Adrenal gland (tissue), 19 donors: ENCODE measurements at regions of chr17 and their contacts with region 1.

Region 1: GRCh38 chr17:37283414-37283961 is 92.3 kb upstream of the C17orf78 start:
- DNase-seq: no peak
- H3K4me3 ChIP-seq: no peak overlapping the region
- H3K27ac ChIP-seq: no peak overlapping the region
- H3K4me1 ChIP-seq: peaks cover 17 to 23% of the 10 kb centered on the region in 2 donors
- H3K27me3 ChIP-seq: no peaks in the 10 kb centered on the region
- CTCF ChIP-seq: no peak
- POLR2A ChIP-seq: no peak

Region 2: DNA sequence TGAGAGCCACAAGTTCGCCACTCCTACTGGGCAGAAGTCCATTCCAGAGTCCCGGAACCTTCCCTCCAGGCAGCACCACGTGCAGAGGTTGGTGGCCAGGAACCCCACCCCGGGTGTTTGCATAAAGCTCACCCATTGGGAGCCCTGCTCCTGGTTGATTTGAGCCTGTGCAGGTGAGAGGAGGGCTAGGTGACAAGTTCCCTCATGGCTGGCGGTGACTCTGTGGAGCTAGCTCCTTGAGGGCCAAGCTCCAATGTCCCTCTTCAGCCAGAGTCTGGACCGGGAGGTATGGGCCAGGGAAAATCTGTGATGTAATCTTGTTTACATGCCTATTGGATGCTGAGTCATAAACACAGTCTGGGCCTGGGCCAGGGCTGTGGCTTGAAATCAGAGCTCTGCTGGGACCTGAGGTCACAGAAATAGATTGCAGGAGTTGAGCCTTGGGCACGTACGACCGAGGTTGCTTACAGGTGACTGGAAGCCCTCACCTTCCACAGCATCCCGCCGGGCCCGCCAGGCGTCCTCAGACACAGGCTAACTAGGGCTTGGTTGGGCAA is 215.9 kb before region 1 on chr17:
- intact Hi-C with region 1: no loop called
- DNase-seq: peak; percentile 86 to 96 (median 93)
- H3K4me3 ChIP-seq: peak overlapping the region in 1 of 4 donors; percentile 28
- H3K27ac ChIP-seq: peak overlapping the region in 4 of 5 donors; percentile 14 to 81 (median 58)
- H3K4me1 ChIP-seq: peaks cover 0 to 5% of the 10 kb centered on the region in 2 donors
- H3K27me3 ChIP-seq: no peaks in the 10 kb centered on the region
- CTCF ChIP-seq: no peak
- POLR2A ChIP-seq: peak in 1 of 2 donors; percentile 70

Region 3: GRCh38 chr17:37259030-37259735 is 24.3 kb before region 1 on chr17:
- intact Hi-C with region 1: no loop called
- DNase-seq: no peak
- H3K4me3 ChIP-seq: no peak overlapping the region
- H3K27ac ChIP-seq: no peak overlapping the region
- H3K4me1 ChIP-seq: no peaks in the 10 kb centered on the region
- H3K27me3 ChIP-seq: no peaks in the 10 kb centered on the region
- CTCF ChIP-seq: no peak
- POLR2A ChIP-seq: no peak

Region 4: GRCh38 chr17:37358830-37359681 is 75.6 kb after region 1 on chr17:
- intact Hi-C with region 1: loop called in 1 of 2 experiments (anchors 10 kb)
- DNase-seq: peak; percentile 96 to 98 (median 97)
- H3K4me3 ChIP-seq: peak overlapping the region; percentile 75 to 82 (median 79)
- H3K27ac ChIP-seq: peak overlapping the region; percentile 59 to 95 (median 79)
- H3K4me1 ChIP-seq: peaks cover 9 to 14% of the 10 kb centered on the region in 2 donors
- H3K27me3 ChIP-seq: no peaks in the 10 kb centered on the region
- CTCF ChIP-seq: peak in 3 of 6 experiments; percentile 47 to 57 (median 52)
- POLR2A ChIP-seq: peak; percentile 75 to 81